ENCODE measurements at regions of chr16 and their contacts with region 1.

Region 1: GRCh38 chr16:74709441-74709877 is 8.8 kb upstream of the MLKL start:
- DNase-seq: peak; percentile 72
- ATAC-seq: peak; percentile 99
- H3K4me3 ChIP-seq: no peak overlapping the region
- H3K27ac ChIP-seq: no peak overlapping the region
- H3K4me1 ChIP-seq: no peaks in the 10 kb centered on the region
- H3K27me3 ChIP-seq: peaks cover 8% of the 10 kb centered on the region; the same call in 1 of the 2 replicates
- CTCF ChIP-seq: peak; percentile 98
- POLR2A ChIP-seq: 0 out of 2 replicates have a peak, but pooled peaks have one; percentile 29
- RAD21 ChIP-seq: peak; percentile 99

Region 2: GRCh38 chr16:74617206-74617788 is 92.2 kb before region 1 on chr16:
- CTCF ChIA-PET with region 1: no interaction called
- POLR2A ChIA-PET with region 1: no interaction called
- dilution Hi-C with region 1: no loop called
- in situ Hi-C with region 1: no loop called
- intact Hi-C with region 1: no loop called
- DNase-seq: no peak
- ATAC-seq: no peak
- H3K4me3 ChIP-seq: no peak overlapping the region
- H3K27ac ChIP-seq: no peak overlapping the region
- H3K4me1 ChIP-seq: peaks cover 3% of the 10 kb centered on the region; the same call in 1 of the 2 replicates
- H3K27me3 ChIP-seq: no peaks in the 10 kb centered on the region
- CTCF ChIP-seq: no peak
- POLR2A ChIP-seq: no peak
- RAD21 ChIP-seq: no peak

Region 3: GRCh38 chr16:74807052-74807646 is 97.7 kb after region 1 on chr16:
- CTCF ChIA-PET with region 1: no interaction called
- POLR2A ChIA-PET with region 1: no interaction called
- dilution Hi-C with region 1: no loop called
- in situ Hi-C with region 1: loop called (anchors 5 kb)
- intact Hi-C with region 1: no loop called
- DNase-seq: no peak
- ATAC-seq: no peak
- H3K4me3 ChIP-seq: no peak overlapping the region
- H3K27ac ChIP-seq: no peak overlapping the region
- H3K4me1 ChIP-seq: no peaks in the 10 kb centered on the region
- H3K27me3 ChIP-seq: peaks cover 2% of the 10 kb centered on the region
- CTCF ChIP-seq: no peak
- POLR2A ChIP-seq: no peak
- RAD21 ChIP-seq: no peak

Measured in IMR-90 (cell line).